Dendritic cell treated with granulocyte-macrophage colony-stimulating factor and Interleukin-4, amounts not matched to agents 40 ng/mL and 50 ng/mL, for 4 days (primary cell): ENCODE measurements at regions of chr14 and their contacts with region 1.

Region 1: GRCh38 chr14:83463500-83464098 is 1929.9 kb upstream of the SEL1L start:
- H3K4me3 Mint-ChIP-seq: no peak overlapping the region
- H3K27ac Mint-ChIP-seq: no peak overlapping the region
- H3K4me1 Mint-ChIP-seq: no peaks in the 10 kb centered on the region
- H3K27me3 Mint-ChIP-seq: no peaks in the 10 kb centered on the region

Region 2: DNA sequence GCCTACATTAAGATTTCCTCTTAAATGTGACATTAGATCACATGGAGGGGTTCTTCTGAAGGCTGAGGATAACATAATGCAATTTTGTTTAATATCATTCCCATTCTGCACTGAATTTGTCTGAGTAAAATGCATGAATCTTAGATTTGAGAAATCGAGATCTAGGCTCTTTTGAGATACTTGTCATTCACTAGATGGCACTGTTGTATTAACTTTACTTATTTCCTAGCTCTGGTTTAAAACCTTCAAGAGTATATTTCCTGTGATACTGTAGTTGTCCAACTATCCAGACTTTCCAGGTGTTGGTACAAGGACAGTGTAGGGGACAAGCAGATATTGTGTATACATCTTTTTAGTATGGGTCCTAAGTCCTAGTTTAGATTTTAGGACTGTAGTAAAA is 1838.3 kb before region 1 on chr14:
- intact Hi-C with region 1: loop called (anchors 5 kb)
- H3K4me3 Mint-ChIP-seq: no peak overlapping the region
- H3K27ac Mint-ChIP-seq: no peak overlapping the region
- H3K4me1 Mint-ChIP-seq: peaks cover 6% of the 10 kb centered on the region
- H3K27me3 Mint-ChIP-seq: peaks cover 2% of the 10 kb centered on the region

Region 3: DNA sequence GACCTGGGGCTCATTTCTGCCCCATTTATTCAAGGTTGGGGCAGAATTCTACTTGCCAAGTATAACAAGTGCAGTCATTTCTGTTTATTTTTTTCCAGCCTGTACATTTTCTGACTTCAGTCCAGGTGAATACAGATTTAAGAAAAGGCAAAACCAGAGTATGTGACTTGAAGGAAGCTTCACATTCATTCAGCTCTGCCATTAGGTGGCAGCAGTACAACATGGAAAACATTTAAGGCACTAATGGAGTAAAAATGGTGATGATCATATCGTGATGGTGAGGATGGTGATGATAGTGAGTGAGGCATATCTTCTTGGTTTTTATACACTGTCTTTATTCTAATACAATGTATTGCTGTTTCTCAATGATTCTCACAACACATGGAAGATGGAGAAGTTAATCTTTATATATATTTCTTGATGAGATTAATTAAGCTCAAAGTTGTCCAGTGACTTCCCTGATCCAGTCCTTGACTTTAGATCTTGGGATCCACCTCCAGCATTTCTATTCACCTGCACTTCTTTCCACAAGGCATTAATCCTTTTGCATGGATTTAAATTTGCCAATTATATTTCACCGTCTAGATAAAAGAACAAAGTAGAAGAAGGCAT is 1753.3 kb before region 1 on chr14:
- intact Hi-C with region 1: loop called (anchors 10 kb)
- H3K4me3 Mint-ChIP-seq: no peak overlapping the region
- H3K27ac Mint-ChIP-seq: no peak overlapping the region
- H3K4me1 Mint-ChIP-seq: no peaks in the 10 kb centered on the region
- H3K27me3 Mint-ChIP-seq: no peaks in the 10 kb centered on the region

Region 4: DNA sequence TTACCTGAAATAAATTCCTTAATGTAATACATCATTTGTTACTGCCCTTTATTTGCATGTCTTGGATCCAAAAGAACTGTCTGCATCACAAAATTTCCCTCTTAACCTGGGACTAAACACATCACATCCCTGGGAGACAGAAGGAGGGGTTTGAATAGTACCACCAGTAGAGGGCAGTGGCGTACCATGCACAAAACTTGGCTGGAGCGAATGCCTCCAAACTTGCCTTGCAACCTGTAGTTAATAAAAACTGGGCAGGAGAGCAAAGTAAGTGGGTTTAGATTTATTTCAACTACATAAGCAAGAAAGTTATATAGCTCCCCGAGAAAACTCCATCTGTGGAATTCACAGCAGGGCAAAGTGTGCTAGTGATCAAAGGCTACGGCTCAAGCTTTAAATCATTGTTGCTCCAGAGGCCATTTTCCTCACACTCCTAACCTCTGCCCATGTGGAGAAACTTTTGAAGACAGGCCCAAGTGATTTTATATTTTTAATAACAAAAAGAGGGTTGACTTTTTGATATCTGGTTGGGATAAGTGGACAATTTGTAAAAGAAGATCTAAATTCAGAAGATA is 753.2 kb before region 1 on chr14:
- intact Hi-C with region 1: loop called (anchors 5 kb)
- H3K4me3 Mint-ChIP-seq: no peak overlapping the region
- H3K27ac Mint-ChIP-seq: no peak overlapping the region
- H3K4me1 Mint-ChIP-seq: peaks cover 6% of the 10 kb centered on the region
- H3K27me3 Mint-ChIP-seq: no peaks in the 10 kb centered on the region

Region 5: DNA sequence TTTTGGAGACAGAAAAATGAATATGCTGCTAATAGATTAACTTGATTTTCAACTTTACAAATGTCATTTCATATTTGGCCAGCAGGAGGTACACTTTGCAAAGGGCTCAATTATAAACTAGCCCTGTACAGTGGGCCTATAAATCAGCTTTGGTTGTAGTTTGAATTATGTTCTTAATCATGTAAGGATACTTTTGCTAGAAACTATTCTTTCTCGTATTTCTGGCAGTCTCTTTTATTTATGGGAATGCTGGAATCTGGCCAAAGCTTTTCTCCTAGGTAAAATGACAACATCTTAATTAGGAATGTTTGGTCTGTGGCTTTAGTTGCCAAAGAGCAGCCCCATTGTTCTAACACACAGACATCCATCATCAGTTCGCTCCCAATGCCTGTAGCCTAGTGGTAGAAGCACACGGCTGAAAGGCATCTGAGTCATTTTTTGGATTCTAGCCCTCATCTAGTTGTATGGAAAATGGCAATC is 607.6 kb before region 1 on chr14:
- intact Hi-C with region 1: loop called (anchors 5 kb)
- H3K4me3 Mint-ChIP-seq: no peak overlapping the region
- H3K27ac Mint-ChIP-seq: no peak overlapping the region
- H3K4me1 Mint-ChIP-seq: no peaks in the 10 kb centered on the region
- H3K27me3 Mint-ChIP-seq: no peaks in the 10 kb centered on the region

Region 6: DNA sequence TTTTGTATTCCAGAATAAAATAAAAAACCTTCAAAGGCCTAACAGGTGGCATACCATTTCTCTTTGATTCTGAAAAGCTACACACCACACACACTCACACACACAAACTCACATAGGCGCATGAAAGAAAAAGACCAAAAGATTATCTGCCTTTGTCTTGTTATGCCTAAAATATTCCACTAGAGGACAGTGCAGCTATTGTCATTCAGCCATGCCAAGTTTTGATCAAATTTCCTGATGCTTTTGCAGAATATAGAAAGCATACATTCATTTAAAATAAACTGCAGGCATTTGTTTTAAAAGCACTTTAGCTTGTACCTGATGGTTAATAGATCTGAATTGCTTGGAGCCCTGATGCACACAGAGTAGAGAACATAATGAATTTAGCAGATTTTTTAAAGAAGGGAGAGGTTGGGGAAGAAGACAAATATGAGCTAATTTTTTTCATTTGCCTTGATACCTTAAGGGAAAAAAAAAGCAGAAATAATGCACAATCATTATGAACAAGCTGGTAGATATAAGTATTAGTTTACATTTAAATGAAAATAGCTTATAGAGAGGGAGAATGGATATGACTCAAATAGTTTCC is 163.0 kb before region 1 on chr14:
- intact Hi-C with region 1: loop called (anchors 5 kb)
- H3K4me3 Mint-ChIP-seq: no peak overlapping the region
- H3K27ac Mint-ChIP-seq: no peak overlapping the region
- H3K4me1 Mint-ChIP-seq: no peaks in the 10 kb centered on the region
- H3K27me3 Mint-ChIP-seq: no peaks in the 10 kb centered on the region

Region 7: GRCh38 chr14:83395321-83395720 is 68.3 kb before region 1 on chr14:
- intact Hi-C with region 1: no loop called
- H3K4me3 Mint-ChIP-seq: no peak overlapping the region
- H3K27ac Mint-ChIP-seq: no peak overlapping the region
- H3K4me1 Mint-ChIP-seq: no peaks in the 10 kb centered on the region
- H3K27me3 Mint-ChIP-seq: no peaks in the 10 kb centered on the region

Region 8: DNA sequence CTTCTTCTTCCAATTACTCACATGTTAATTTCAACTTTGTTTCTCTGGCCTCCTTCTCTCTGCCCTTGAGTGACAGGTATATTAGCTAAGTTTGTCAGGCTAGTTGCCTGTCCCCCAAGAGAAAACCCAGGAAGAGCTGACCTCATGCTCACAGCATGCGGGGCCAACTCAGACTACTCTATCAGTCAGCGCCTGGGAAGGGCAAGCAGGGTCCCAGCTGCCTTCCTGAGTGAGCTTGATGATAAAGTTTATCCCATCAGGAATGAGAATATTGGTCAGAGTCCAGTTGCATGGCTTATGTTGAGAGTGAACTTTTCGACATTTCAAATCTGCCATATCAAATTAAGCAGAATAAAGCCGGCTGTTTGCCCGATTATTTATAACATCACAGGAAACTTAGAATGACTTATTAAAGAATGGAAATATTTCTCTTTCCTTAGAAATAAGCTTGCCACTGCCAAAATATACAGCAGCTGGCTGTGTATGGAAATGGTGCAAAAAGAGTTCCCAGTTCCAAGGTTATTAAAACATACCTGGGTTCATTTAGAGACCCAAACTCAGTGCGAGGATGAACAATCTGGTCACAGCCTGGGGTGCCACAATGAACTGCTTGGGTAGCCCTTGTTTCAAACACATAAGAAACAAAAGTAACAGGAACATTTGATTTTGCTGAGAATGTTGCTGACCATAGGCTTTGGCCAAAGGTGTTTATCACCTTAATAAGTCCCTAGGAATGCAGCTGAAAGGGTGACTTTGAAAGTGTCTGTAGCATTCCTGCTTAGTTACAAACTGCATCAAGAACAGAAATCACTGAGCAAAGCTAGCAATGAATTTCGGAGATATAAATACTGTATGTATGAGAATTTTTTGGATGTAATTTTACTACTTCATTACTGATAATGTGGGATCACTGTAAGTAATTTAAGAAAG is 512.5 kb after region 1 on chr14:
- intact Hi-C with region 1: no loop called
- H3K4me3 Mint-ChIP-seq: no peak overlapping the region
- H3K27ac Mint-ChIP-seq: no peak overlapping the region
- H3K4me1 Mint-ChIP-seq: no peaks in the 10 kb centered on the region
- H3K27me3 Mint-ChIP-seq: no peaks in the 10 kb centered on the region

Region 9: DNA sequence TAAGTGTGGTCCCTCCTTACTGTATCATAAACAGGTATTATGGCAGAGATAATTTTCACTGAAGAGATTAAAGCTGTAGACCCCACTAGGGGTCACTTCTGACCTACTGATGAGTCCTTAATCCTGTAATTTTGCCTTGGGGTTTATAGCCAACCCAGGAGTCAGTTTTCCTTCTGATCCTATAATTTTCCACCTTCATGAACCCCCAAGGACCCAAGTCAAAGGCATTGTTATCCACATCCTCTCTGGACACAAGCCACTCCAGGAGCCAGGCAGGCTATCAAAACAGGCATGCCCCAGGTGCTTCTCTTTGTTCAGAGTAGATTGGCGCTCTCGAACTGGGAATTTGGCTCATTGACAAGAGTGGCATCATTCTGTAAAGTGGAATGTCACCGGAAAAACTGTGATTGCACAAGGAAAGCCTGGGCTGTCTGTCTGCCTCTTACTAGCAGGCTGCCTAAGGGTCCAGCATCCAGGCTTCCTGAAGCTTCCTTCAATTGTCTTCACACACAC is 543.1 kb after region 1 on chr14:
- intact Hi-C with region 1: loop called (anchors 10 kb)
- H3K4me3 Mint-ChIP-seq: no peak overlapping the region
- H3K27ac Mint-ChIP-seq: no peak overlapping the region
- H3K4me1 Mint-ChIP-seq: no peaks in the 10 kb centered on the region
- H3K27me3 Mint-ChIP-seq: no peaks in the 10 kb centered on the region